ENCODE measurements at regions of chr9 and their contacts with region 1.

Region 1: DNA sequence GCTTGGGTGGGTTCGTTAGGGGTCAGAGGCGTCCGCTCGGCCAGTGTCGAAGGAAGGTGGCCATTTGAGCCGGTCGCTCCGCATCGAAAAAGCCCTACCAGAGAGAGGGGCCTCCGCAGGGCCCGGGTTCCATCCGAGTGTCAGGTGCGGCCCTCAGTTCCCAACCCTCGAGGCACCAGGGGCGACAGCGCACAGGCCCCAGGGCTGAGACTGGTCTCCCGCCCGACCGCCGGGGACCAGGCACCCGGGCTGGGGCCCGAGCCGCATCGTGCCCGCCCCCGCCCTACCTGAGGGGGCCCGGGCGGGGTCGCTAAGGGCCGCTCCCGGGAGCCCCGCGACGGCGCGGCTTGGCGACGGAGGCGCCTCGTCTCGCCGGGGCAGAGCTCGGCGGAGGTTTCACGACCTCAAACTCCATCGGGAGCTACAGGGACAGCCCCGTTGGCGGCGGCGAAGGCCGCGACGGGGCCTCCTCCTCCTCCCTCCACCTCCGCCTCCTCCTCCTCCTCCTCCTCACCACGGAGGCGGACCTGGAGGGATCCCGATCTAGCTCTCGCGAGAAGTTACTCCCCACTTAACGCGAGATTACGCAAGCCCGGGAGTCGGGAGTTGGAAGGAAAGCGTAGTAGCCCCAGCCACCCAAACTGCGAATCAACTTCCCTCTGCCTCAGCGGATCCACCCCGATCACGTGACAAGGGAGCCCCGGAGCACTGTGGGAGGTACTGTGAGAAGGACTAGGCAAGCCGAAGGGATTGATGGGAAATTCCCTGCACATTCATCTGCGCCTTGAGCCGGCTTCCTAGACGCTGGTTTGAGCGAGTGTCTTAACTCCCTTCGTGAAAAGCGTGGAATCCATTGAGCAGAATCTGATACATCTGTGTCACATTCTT is at the start of gene RC3H2:
- DNase-seq: peak; percentile 93 to 99
- ATAC-seq: peak; percentile 97 to 99 (median 99)
- H3K4me3 ChIP-seq: peak within 1 kb of the TSS; percentile 73 to 99 (median 86)
- H3K27ac ChIP-seq: peak within 1 kb of the TSS; percentile 89 to 98 (median 94)
- H3K4me1 ChIP-seq: peaks cover 5 to 49% (median 40%) of the 10 kb centered on the region in 9 donors
- H3K27me3 ChIP-seq: no peaks in the 10 kb centered on the region
- CTCF ChIP-seq: no peak
- total RNA-seq, gene RC3H2: 35.6 to 52.2 (median 43.5) TPM

Region 2: DNA sequence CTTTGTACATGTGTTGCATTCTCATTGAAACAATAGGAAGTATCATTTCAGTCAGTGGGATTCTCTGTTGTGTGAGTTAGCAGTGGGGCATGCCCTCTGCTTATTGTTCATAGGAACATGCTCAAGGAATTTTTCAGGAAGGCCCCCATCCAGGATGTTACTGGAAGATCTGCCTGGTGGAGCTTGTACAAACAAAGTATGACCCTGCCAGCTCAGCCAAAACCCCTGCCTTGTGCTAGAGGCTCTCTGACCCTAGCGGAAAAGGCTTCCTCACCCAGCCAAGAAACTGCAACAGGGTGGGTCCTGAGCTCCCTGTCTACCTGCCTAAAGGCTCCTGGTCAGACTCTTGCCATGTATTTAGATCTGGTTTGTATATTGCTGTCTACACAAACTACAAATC is 597.1 kb before region 1 on chr9:
- intact Hi-C with region 1: no loop called
- DNase-seq: peak in 1 of 2 donors; percentile 15
- ATAC-seq: peak; percentile 28 to 81 (median 66)
- H3K4me3 ChIP-seq: no peak overlapping the region
- H3K27ac ChIP-seq: peak overlapping the region in 6 of 10 donors; percentile 13 to 63 (median 50)
- H3K4me1 ChIP-seq: peaks cover 0 to 40% (median 24%) of the 10 kb centered on the region in 9 donors
- H3K27me3 ChIP-seq: no peaks in the 10 kb centered on the region
- CTCF ChIP-seq: no peak

Region 3: GRCh38 chr9:122931226-122932121 is 26.4 kb after region 1 on chr9 and contains the start of gene ZBTB26:
- intact Hi-C with region 1: loop called in 1 of 10 experiments (anchors 1 kb)
- DNase-seq: peak; percentile 93 to 96
- ATAC-seq: peak; percentile 98 to 99 (median 98)
- H3K4me3 ChIP-seq: peak within 1 kb of the TSS; percentile 62 to 94 (median 84)
- H3K27ac ChIP-seq: peak within 1 kb of the TSS; percentile 36 to 96 (median 90)
- H3K4me1 ChIP-seq: peaks cover 3 to 41% (median 32%) of the 10 kb centered on the region in 9 donors
- H3K27me3 ChIP-seq: no peaks in the 10 kb centered on the region
- CTCF ChIP-seq: no peak
- total RNA-seq, gene ZBTB26: 3.0 to 5.5 (median 4.5) TPM

Region 4: DNA sequence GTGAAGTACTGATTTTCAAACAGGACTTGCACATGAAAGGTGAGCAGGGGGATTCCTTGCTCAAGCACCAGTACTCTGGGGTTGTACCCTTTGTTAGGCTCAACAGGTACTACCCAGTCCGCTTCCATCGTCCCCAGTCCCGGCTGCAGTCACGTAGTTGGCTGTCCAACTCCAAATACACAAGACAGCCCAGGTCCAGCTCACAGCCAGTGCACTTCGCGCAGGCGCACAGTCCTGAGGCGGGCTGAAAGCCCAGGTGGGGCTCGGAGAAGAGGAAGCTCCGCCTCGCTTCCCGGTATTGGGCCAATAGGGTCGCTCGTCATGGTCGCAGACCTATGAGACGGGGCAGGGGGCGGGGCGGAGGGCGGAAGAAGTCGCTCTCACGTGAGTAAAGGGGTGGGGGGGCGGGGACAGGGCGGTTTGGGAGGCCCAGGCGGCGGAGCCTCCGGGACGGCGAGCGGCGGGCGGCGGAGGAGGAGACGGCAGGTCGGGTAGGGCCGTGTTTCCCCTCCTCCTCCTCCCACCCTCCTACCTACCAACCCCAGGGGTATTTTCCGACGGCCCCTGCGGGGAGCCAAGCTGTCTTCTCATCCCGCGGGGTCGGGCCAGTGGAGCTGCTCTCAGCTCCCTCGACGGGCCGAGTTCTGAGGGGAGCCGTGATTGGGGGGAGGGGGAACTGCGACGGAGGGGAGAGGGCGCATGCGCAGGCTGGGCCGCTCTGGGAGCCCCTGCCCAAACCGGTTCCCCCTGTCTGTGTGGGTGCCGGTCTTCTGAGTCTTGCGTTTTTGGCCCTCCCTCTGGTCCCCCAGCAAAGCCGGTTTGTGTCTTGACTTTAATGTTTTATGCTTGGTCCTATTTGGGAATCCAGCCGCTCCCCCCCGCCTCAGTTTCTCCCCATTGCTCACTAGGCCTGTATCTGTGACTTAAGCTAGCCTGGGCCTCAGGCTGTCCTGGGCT is 35.8 kb after region 1 on chr9 and contains the start of gene RABGAP1:
- intact Hi-C with region 1: loop called in 2 of 10 experiments (anchors 5 kb)
- DNase-seq: peak; percentile 99 to 100
- ATAC-seq: peak; percentile 97 to 99 (median 99)
- H3K4me3 ChIP-seq: peak within 1 kb of the TSS; percentile 77 to 96 (median 88)
- H3K27ac ChIP-seq: peak within 1 kb of the TSS; percentile 76 to 94 (median 88)
- H3K4me1 ChIP-seq: peaks cover 3 to 51% (median 36%) of the 10 kb centered on the region in 9 donors
- H3K27me3 ChIP-seq: no peaks in the 10 kb centered on the region
- CTCF ChIP-seq: no peak
- total RNA-seq, gene RABGAP1: 36.9 to 62.3 (median 48.7) TPM

Region 5: GRCh38 chr9:122978601-122979000 is 73.5 kb after region 1 on chr9:
- intact Hi-C with region 1: loop called in 1 of 10 experiments (anchors 5 kb)
- DNase-seq: no peak
- ATAC-seq: no peak
- H3K4me3 ChIP-seq: no peak overlapping the region
- H3K27ac ChIP-seq: no peak overlapping the region
- H3K4me1 ChIP-seq: peaks cover 0 to 36% (median 21%) of the 10 kb centered on the region in 9 donors
- H3K27me3 ChIP-seq: no peaks in the 10 kb centered on the region
- CTCF ChIP-seq: no peak

Measured in heart right ventricle (tissue), 16 donors.